GM12878 (cell line): ENCODE measurements at regions of chr1 and their contacts with region 1.

Region 1: DNA sequence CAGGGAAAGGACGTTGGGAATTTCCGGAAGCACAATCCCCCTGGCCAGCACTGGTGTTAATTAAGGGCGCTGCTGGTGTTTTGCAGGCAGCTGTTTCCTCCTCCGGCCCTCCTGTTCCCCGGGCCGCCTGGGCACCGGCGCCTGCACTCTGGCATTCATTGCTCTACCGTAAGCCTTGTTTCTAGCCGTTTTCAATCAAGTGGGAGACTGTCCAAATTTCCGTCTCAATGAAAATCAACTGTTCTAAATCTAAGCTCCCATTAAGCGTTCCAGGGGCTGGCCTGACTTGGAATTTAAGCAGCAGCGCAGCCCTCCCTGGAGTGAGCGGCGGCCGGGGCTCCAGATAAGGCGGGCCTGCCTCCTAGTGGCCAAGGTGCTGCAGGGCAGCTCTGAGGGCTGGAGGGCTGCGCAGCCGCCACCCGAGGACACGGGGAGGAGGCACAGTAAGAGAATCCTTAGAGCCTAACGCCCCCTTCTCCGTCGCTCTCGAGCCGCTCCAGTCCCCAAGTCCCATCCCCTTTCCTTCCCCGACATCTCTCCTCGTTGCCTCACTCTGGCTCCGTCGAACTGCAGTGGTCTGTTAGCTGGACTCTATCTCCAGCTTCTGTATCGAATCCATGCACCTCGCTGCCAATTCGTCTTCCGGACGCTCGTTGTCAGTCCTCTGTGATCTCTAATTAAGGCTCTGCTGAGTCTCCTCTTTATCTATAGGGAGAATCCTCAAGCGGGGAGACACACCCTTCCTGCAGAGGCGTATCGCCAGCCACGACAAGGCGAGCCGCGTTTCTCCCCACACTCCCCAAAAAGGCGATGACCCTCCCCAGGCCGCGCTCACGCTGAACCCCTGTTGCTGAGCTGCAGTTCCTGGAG is 57.8 kb upstream of the LRRC8D start:
- DNase-seq: peak; percentile 40
- ATAC-seq: peak; percentile 100
- H3K4me3 ChIP-seq: peak overlapping the region; percentile 66
- H3K27ac ChIP-seq: no peak overlapping the region
- H3K4me1 ChIP-seq: peaks cover 5% of the 10 kb centered on the region; the same call in 1 of the 2 replicates
- H3K27me3 ChIP-seq: no peaks in the 10 kb centered on the region
- CTCF ChIP-seq: peak; percentile 95 to 99 (median 99); a peak in 5 of 6 replicates
- EP300 ChIP-seq: no peak
- POLR2A ChIP-seq: no peak
- RAD21 ChIP-seq: peak; percentile 98

Region 2: GRCh38 chr1:89524369-89525168 is 238.4 kb before region 1 on chr1 and contains the start of gene LRRC8B:
- CTCF ChIA-PET with region 1: interaction called, 52 read pairs
- POLR2A ChIA-PET with region 1: interaction called, 3 read pairs
- RAD21 ChIA-PET with region 1: interaction called, 8 read pairs
- SMC1A ChIA-PET with region 1: interaction called, 6 read pairs
- in situ Hi-C with region 1: no loop called
- intact Hi-C with region 1: loop called (anchors 2 kb)
- DNase-seq: peak; percentile 71
- ATAC-seq: peak; percentile 91
- H3K4me3 ChIP-seq: peak within 1 kb of the TSS; percentile 66
- H3K27ac ChIP-seq: peak within 1 kb of the TSS; percentile 85
- H3K4me1 ChIP-seq: peaks cover 12% of the 10 kb centered on the region; the same call in 1 of the 2 replicates
- H3K27me3 ChIP-seq: no peaks in the 10 kb centered on the region
- CTCF ChIP-seq: no peak
- EP300 ChIP-seq: no peak; a peak in 1 of 4 replicates
- POLR2A ChIP-seq: peak; percentile 90
- RAD21 ChIP-seq: no peak
- polyA plus RNA-seq, gene LRRC8B: 1.3 to 1.4 TPM

Region 3: DNA sequence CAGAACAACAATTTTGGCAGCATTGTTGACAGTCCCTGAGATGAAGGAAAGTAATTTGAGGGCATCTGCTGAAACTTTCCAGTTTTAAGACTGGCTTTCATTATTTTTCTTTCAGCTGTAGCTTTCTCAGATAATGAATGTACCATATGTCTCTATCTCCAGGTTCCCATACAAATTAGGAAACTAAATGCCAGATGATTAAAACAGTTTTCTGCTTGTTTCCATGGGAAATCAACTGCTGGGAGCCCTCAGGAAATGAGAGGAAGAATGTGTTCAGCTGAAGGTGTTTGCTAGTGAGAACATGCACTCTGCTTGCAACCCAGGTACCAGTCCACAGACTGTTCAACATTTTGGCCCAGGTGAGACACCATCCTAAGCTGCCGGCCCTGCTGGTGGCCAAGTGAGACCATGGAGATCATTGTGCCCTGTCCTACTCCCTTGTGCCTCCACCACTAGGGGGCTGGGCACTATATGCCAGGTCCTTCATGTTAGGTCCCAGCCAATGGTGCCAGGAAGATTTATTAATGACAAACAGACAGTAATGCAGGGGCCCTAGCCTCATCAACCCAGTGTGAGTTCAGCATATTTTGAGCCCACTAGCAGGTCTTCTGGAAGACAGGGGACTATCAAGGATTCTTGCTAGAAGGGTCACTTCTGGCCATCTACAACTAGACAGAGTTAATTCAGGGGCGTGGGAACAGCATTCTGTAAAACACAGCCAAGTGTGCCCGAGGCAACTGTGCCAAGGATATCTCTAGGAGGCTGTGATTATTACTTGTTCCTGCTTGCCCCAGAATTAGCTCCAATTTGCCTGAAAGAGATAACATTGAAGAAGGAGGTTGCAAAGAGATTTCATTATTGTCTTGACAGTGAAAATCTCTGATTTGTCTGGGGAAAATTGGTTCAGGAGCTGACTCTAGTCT is 147.1 kb before region 1 on chr1:
- CTCF ChIA-PET with region 1: interaction called, 29 read pairs
- POLR2A ChIA-PET with region 1: interaction called, 5 read pairs
- RAD21 ChIA-PET with region 1: interaction called, 28 read pairs
- SMC1A ChIA-PET with region 1: interaction called, 21 read pairs
- in situ Hi-C with region 1: no loop called
- intact Hi-C with region 1: loop called (anchors 5 kb)
- DNase-seq: no peak
- ATAC-seq: peak; percentile 37
- H3K4me3 ChIP-seq: no peak overlapping the region
- H3K27ac ChIP-seq: no peak overlapping the region
- H3K4me1 ChIP-seq: peaks cover 14% of the 10 kb centered on the region
- H3K27me3 ChIP-seq: no peaks in the 10 kb centered on the region
- CTCF ChIP-seq: peak; percentile 15 to 52 (median 37); a peak in 4 of 6 replicates
- EP300 ChIP-seq: no peak
- POLR2A ChIP-seq: no peak
- RAD21 ChIP-seq: 0 out of 2 replicates have a peak, but pooled peaks have one; percentile 8

Region 4: DNA sequence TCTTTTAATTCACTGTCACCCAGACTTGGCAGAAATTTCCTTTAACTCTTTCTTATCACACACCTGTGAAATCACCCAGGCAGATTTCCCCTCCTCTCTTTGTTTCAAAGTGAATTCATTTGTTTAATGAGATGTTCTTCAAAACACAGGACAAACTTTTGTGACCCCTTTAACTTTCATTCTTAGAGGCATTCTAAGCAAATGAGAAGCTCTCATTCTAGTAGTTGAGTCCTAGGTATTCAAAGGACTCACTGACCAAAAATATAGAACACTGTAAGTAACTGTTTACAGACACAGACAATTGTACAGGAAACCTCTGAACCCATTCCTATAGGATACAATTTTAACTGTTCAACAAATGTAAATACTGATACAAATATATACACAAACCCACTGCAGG is 113.2 kb before region 1 on chr1:
- CTCF ChIA-PET with region 1: interaction called, 20 read pairs
- POLR2A ChIA-PET with region 1: no interaction called
- RAD21 ChIA-PET with region 1: interaction called, 10 read pairs
- SMC1A ChIA-PET with region 1: interaction called, 15 read pairs
- in situ Hi-C with region 1: no loop called
- intact Hi-C with region 1: no loop called
- DNase-seq: no peak
- ATAC-seq: peak; percentile 69
- H3K4me3 ChIP-seq: no peak overlapping the region
- H3K27ac ChIP-seq: no peak overlapping the region
- H3K4me1 ChIP-seq: peaks cover 12% of the 10 kb centered on the region
- H3K27me3 ChIP-seq: no peaks in the 10 kb centered on the region
- CTCF ChIP-seq: no peak
- EP300 ChIP-seq: no peak
- POLR2A ChIP-seq: no peak
- RAD21 ChIP-seq: no peak

Region 5: DNA sequence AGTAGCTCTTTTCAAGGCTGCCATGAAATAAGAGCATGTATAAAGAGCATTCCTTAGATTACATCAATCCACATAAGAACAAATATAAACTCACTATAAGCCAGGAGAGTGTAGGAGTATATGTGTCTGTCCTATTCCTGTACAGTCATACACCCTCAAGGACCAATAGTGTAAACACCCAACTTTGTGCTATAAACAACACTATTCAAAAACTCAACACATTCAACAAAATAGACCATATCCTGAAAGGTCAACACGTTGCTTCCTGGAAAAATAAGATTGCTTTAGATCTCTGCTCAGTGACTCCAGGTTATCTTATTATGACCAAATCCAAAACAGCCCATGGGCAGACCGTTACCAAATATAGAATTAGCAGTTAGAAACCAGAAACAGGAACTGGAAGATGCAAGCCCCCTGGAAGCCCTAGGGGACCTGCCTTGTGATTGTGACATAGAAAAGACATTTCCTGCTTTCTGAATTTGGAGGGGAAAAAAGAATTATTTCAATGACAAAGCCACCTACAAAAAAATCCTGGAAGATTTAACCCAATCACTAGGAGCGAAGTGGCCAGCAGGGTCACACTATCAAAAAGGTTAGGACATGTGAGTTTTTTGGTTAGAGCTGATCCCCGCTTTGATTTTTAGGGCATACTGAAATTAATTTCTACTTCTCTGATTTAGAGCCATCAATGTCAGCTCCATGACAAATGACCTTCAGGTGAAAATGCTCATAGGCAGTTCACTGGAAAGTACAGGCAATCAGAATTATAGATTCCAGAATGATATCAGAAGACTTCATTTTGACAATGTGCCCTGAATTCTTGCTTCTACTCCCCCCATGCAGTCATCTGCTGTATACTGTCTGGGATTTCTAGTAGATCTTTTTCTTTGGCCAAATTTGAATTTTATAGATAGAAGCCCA is 70.2 kb before region 1 on chr1:
- CTCF ChIA-PET with region 1: interaction called, 41 read pairs
- POLR2A ChIA-PET with region 1: interaction called, 7 read pairs
- RAD21 ChIA-PET with region 1: interaction called, 15 read pairs
- SMC1A ChIA-PET with region 1: interaction called, 17 read pairs
- in situ Hi-C with region 1: no loop called
- intact Hi-C with region 1: loop called (anchors 2 kb)
- DNase-seq: peak; percentile 52
- ATAC-seq: peak; percentile 83
- H3K4me3 ChIP-seq: peak overlapping the region; percentile 55; the same call in 1 of the 2 replicates
- H3K27ac ChIP-seq: peak overlapping the region; percentile 86
- H3K4me1 ChIP-seq: peaks cover 24% of the 10 kb centered on the region
- H3K27me3 ChIP-seq: no peaks in the 10 kb centered on the region
- CTCF ChIP-seq: no peak
- EP300 ChIP-seq: peak; percentile 89 to 91
- POLR2A ChIP-seq: no peak
- RAD21 ChIP-seq: no peak

Region 6: DNA sequence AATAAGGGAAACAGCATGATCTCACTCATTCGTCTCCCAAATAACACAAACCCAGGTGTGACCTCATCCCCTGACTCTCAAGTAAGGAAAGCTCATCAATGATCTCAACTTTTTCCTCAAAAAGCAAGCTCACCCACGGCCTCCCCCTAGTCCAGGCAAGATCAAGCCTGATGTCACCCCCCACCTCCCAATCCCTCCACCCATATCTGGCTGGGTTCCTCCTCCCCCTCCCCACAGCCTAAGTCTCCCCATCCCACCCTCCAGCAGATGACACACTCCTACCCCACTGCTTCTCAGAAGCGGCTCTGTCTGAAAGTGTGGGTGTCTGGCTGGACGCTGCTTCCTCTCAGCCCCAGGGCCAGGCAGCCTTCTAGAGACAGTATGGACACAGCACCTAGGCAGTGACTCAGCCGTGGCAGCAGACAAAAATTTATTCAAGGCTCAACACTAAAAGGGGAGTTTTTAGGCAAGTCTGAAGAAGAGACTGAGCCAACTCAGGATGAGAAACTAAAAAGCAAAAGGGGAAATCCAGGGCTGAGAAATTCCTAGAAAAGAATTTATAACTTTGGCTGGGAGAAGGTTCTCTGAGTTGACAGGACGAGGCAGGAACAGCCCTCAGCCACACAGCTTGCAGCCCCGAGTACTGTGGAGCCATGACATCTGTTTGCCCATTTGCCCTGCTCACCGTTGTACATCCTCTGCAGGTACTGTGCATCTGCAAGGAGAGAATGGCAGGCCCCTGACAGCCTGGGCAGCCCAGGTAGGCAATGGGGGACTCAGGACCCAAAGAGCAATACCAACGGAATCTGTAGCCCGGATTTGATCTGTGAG is 23.8 kb before region 1 on chr1:
- CTCF ChIA-PET with region 1: interaction called, 5 read pairs
- POLR2A ChIA-PET with region 1: interaction called, 4 read pairs
- RAD21 ChIA-PET with region 1: interaction called, 4 read pairs
- SMC1A ChIA-PET with region 1: interaction called, 10 read pairs
- in situ Hi-C with region 1: no loop called
- intact Hi-C with region 1: no loop called
- DNase-seq: no peak
- ATAC-seq: peak; percentile 91
- H3K4me3 ChIP-seq: no peak overlapping the region
- H3K27ac ChIP-seq: no peak overlapping the region
- H3K4me1 ChIP-seq: peaks cover 10% of the 10 kb centered on the region
- H3K27me3 ChIP-seq: no peaks in the 10 kb centered on the region
- CTCF ChIP-seq: no peak
- EP300 ChIP-seq: no peak
- POLR2A ChIP-seq: no peak
- RAD21 ChIP-seq: no peak

Region 7: GRCh38 chr1:90133133-90133532 is 370.1 kb after region 1 on chr1:
- CTCF ChIA-PET with region 1: no interaction called
- POLR2A ChIA-PET with region 1: no interaction called
- RAD21 ChIA-PET with region 1: no interaction called
- SMC1A ChIA-PET with region 1: no interaction called
- in situ Hi-C with region 1: no loop called
- intact Hi-C with region 1: no loop called
- DNase-seq: no peak
- ATAC-seq: peak; percentile 92
- H3K4me3 ChIP-seq: no peak overlapping the region
- H3K27ac ChIP-seq: no peak overlapping the region
- H3K4me1 ChIP-seq: no peaks in the 10 kb centered on the region
- H3K27me3 ChIP-seq: no peaks in the 10 kb centered on the region; a peak in 1 of 4 replicates
- CTCF ChIP-seq: peak; percentile 45 to 56 (median 47); a peak in 5 of 6 replicates
- EP300 ChIP-seq: no peak
- POLR2A ChIP-seq: no peak
- RAD21 ChIP-seq: peak; percentile 61